Activated CD4-positive, alpha-beta memory T cell treated with anti-CD3 and anti-CD28 coated beads for 36 hours (primary cell): ENCODE measurements at regions of chr3 and their contacts with region 1.

Region 1: DNA sequence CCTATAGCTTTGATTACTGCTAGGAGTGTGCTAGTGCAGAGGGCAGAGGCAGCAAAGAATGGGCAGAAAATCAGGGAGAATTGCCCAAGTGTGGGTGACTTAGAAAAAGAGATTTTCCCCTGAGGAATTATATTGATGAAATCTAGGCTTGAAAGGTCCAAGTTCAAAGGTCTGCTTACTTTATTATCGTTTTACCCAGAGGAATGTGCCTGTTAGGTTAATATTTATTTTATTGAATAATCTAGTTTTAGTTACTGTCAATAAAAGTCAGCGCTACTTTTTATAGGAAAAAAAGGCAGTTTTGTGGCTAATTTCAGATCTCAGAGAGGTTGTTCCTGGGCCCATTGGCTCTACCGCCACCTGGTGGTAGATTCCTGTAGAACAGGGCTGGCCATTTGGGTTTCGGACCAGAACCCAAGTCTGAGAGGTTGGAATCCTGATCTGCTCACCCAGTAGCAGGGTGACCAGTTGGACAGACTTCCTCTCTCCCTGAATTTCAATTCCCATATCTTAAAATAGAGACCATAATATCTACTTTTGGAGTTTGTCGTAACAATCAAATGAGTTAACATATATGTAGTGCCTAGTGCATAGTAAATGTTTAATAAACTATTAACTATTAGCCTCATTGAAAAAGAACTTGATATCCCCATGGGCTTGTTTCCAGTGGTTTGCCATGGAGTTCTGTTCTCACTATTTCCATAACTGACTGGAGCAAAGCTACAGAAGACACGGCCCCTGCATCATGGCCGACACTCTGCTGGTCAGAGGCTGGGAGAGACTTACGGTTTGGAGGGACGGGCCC is 62.7 kb upstream of the ZNF148 start:
- DNase-seq: peak; percentile 69
- H3K4me3 Mint-ChIP-seq: no peak overlapping the region
- H3K27ac Mint-ChIP-seq: no peak overlapping the region
- H3K4me1 Mint-ChIP-seq: peaks cover 10% of the 10 kb centered on the region
- H3K27me3 Mint-ChIP-seq: no peaks in the 10 kb centered on the region

Region 2: GRCh38 chr3:124928333-124929202 is 509.3 kb before region 1 on chr3:
- CTCF ChIA-PET with region 1: interaction called, 4 read pairs
- POLR2A ChIA-PET with region 1: no interaction called
- intact Hi-C with region 1: loop called (anchors 2 kb)
- DNase-seq: peak; percentile 70
- H3K4me3 Mint-ChIP-seq: no peak overlapping the region
- H3K27ac Mint-ChIP-seq: no peak overlapping the region
- H3K4me1 Mint-ChIP-seq: no peaks in the 10 kb centered on the region
- H3K27me3 Mint-ChIP-seq: peaks cover 3% of the 10 kb centered on the region

Region 3: DNA sequence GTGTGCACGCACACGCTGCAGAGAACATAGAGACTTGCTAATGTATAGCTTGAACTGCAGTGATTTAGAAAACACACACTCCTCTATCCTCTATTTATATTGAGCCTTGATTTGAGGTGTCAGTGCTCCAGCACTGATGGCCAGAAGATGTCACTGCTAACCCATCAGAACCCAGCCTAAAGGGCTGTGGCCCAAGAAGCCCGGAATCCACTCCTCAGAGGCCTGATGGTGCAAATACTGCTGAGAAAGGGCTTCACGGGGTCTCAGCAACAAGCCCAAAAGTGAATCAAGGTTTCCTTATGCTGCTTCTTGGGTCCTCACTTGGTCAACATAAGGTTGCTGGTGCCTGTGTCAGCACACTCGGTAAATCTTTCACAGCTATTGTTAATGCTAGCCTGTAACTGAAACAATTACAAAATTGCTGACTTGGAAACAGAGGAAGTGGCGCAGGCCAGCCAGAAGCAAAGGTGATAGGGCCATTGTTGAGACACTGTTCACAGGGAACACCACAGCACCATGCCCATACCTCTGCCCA is 442.3 kb before region 1 on chr3:
- CTCF ChIA-PET with region 1: interaction called, 42 read pairs
- POLR2A ChIA-PET with region 1: no interaction called
- intact Hi-C with region 1: loop called (anchors 1 kb)
- DNase-seq: peak; percentile 61
- H3K4me3 Mint-ChIP-seq: no peak overlapping the region
- H3K27ac Mint-ChIP-seq: no peak overlapping the region
- H3K4me1 Mint-ChIP-seq: no peaks in the 10 kb centered on the region
- H3K27me3 Mint-ChIP-seq: no peaks in the 10 kb centered on the region

Region 4: GRCh38 chr3:125024817-125025216 is 413.0 kb before region 1 on chr3:
- CTCF ChIA-PET with region 1: no interaction called
- POLR2A ChIA-PET with region 1: no interaction called
- intact Hi-C with region 1: no loop called
- DNase-seq: no peak
- H3K4me3 Mint-ChIP-seq: no peak overlapping the region
- H3K27ac Mint-ChIP-seq: no peak overlapping the region
- H3K4me1 Mint-ChIP-seq: peaks cover 39% of the 10 kb centered on the region
- H3K27me3 Mint-ChIP-seq: no peaks in the 10 kb centered on the region

Region 5: DNA sequence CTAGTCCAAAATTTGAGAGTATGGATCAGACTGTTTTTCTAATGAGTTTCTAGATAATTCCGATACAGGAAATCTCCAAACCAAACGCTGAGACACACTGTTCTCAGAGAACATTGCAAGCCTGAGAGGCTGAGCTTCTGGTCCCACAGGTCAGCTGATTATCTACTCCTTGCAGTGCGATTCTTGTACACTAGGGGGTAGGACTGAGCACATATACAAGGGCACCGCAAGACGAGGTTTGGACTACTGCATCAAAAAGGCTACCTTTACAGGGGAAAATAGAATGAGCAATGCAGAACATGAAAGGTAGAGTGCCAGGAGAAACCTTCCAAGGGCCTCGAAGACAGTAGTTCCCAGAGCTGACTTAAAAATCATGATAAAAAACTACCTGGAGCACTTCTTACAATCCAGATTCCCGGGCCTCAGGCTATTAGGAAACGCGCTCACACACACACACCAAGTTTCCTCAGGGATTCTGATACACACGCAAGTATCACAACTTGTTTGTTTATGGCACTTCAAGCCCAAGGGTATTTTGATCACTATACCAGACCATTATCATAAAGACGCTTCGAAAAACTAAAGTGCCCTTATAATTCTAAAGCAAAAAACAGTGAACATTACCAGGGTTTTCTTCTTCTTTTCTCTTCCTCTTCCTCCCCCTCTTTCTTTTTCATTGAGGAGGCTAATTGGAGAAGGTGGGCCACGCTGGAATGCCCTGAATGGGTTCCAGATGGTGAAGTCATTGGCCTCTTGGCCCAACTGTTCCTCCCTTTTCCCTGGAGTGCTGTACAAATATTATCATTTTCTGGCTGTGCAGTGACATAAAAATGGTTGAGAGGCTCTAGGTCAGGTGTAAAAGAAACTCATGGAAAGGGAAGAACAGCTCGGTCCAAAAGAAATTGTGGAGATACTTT is 287.1 kb before region 1 on chr3:
- CTCF ChIA-PET with region 1: interaction called, 22 read pairs
- POLR2A ChIA-PET with region 1: no interaction called
- intact Hi-C with region 1: loop called (anchors 1 kb)
- DNase-seq: peak; percentile 70
- H3K4me3 Mint-ChIP-seq: no peak overlapping the region
- H3K27ac Mint-ChIP-seq: no peak overlapping the region
- H3K4me1 Mint-ChIP-seq: peaks cover 15% of the 10 kb centered on the region
- H3K27me3 Mint-ChIP-seq: peaks cover 13% of the 10 kb centered on the region

Region 6: DNA sequence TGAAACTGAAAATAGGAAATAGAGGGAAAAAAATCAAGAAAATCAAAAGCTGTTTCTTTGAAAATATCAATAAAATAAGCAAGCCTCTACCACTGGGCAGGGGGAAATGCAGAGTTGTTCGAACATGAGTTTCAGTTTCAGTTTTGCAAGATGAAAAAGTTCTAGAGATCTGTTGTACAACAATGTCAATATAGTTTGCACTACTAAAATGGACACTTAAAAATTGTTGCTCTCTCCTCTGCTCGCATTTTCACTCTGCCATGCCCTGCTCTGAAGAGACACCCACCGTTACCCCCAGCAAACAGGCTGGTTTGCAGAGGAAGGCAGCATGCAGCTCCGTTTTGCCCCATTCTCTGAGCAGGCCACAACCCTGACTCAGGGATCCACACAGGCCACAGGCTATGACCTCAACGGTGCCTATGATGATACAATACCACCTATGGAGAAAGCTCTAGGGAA is 127.2 kb before region 1 on chr3:
- CTCF ChIA-PET with region 1: interaction called, 4 read pairs
- POLR2A ChIA-PET with region 1: no interaction called
- intact Hi-C with region 1: loop called (anchors 5 kb)
- DNase-seq: peak; percentile 72
- H3K4me3 Mint-ChIP-seq: peak overlapping the region; percentile 84
- H3K27ac Mint-ChIP-seq: peak overlapping the region; percentile 81
- H3K4me1 Mint-ChIP-seq: peaks cover 45% of the 10 kb centered on the region
- H3K27me3 Mint-ChIP-seq: no peaks in the 10 kb centered on the region

Region 7: GRCh38 chr3:125374996-125375941 is 62.6 kb before region 1 on chr3 and contains the start of gene ZNF148:
- CTCF ChIA-PET with region 1: no interaction called
- POLR2A ChIA-PET with region 1: no interaction called
- intact Hi-C with region 1: loop called (anchors 5 kb)
- DNase-seq: peak; percentile 93
- H3K4me3 Mint-ChIP-seq: peak within 1 kb of the TSS; percentile 98
- H3K27ac Mint-ChIP-seq: peak within 1 kb of the TSS; percentile 94
- H3K4me1 Mint-ChIP-seq: peaks cover 36% of the 10 kb centered on the region
- H3K27me3 Mint-ChIP-seq: no peaks in the 10 kb centered on the region
- total RNA-seq, gene ZNF148: 27.9 to 29.9 TPM

Region 8: DNA sequence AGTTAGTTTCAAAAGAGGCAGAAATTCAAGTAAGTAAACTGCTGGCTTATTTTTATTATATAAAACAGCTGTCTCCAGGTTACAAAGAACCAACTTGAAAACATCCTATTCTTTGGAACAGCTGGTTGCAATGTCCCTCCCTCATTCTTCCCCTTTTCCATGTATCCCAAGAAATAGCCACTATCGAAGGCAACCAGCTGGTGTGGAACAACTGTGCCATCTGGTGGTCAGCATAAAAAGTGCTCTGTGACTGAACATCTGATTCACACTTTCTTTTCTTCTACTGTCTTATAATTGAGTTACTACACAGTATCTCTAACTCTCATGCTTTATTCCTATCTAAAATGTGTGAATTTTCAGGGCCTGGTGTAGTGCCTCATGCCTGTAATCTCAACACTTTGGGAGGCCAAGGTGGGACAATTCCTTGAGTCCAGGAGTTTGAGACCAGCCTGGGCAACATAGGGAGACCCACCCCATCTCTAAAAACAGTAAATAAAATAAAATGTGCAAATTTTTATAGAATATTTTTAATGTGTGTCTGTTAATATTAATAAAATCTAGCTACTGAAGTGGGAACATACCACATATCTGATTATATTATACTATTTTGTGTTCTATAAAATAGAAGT is 147.9 kb after region 1 on chr3:
- CTCF ChIA-PET with region 1: interaction called, 8 read pairs
- POLR2A ChIA-PET with region 1: no interaction called
- intact Hi-C with region 1: loop called (anchors 5 kb)
- DNase-seq: peak; percentile 57
- H3K4me3 Mint-ChIP-seq: no peak overlapping the region
- H3K27ac Mint-ChIP-seq: no peak overlapping the region
- H3K4me1 Mint-ChIP-seq: peaks cover 23% of the 10 kb centered on the region
- H3K27me3 Mint-ChIP-seq: no peaks in the 10 kb centered on the region